Ovary (tissue), 10 donors: ENCODE measurements at regions of chr11 and their contacts with region 1.

Region 1: DNA sequence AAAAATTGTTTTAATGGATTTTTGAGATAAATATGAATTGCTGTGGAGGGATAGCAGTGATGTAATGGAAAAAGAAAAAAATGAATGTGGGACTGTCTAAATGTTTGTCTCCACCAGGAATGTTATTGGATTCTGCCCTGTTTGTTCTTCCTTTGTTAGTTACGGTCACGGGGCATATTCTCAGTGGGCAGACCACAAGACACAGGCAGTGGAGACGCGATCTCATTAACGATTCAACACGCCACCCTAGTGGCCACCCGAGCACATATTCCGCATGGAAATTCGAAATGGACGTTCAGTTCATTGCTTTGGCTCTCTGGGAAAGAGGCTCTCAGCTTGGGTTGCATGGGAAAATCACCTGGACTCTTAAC is 151.8 kb upstream of the TTC12 start:
- DNase-seq: peak; percentile 44 to 72 (median 58)
- H3K4me3 ChIP-seq: no peak overlapping the region
- H3K27ac ChIP-seq: peak overlapping the region; percentile 7 to 62
- H3K4me1 ChIP-seq: peaks cover 20% of the 10 kb centered on the region
- H3K27me3 ChIP-seq: no peaks in the 10 kb centered on the region
- CTCF ChIP-seq: peak; percentile 22 to 64 (median 62)
- EP300 ChIP-seq: no peak
- POLR2A ChIP-seq: no peak

Region 2: DNA sequence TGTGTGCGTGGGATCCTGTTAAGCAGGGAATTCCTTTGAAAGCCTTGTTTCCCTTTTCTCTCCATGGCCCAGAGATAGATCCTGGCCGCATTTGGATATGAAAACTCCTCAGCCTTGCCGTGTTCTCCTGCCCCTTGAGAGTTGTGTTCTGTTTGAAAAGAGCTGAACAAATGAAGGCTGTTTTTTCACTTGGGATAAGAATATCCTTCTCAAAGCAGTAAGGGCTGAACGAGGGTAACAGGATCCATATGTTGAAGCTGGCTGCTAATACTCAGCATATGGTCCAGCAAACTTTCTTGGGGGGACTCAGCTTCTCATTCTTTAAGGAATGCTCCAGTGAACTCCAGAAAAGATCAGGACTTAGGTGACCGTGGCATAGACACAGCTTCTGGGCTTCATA is 37.3 kb after region 1 on chr11:
- intact Hi-C with region 1: loop called in 1 of 4 experiments (anchors 5 kb)
- DNase-seq: no peak
- H3K4me3 ChIP-seq: no peak overlapping the region
- H3K27ac ChIP-seq: peak overlapping the region; percentile 6 to 67
- H3K4me1 ChIP-seq: peaks cover 10% of the 10 kb centered on the region
- H3K27me3 ChIP-seq: no peaks in the 10 kb centered on the region
- CTCF ChIP-seq: no peak
- EP300 ChIP-seq: no peak
- POLR2A ChIP-seq: no peak

Region 3: GRCh38 chr11:113632981-113633380 is 470.4 kb after region 1 on chr11:
- intact Hi-C with region 1: no loop called
- DNase-seq: no peak
- H3K4me3 ChIP-seq: no peak overlapping the region
- H3K27ac ChIP-seq: no peak overlapping the region
- H3K4me1 ChIP-seq: no peaks in the 10 kb centered on the region
- H3K27me3 ChIP-seq: no peaks in the 10 kb centered on the region
- CTCF ChIP-seq: no peak
- EP300 ChIP-seq: no peak
- POLR2A ChIP-seq: no peak